Activated CD8-positive, alpha-beta T cell treated with anti-CD3 and anti-CD28 coated beads for 36 hours (primary cell): ENCODE measurements at regions of chr15 and their contacts with region 1.

Region 1: GRCh38 chr15:65054333-65055200 is 9.4 kb downstream of the SLC51B start:
- DNase-seq: peak; percentile 77
- ATAC-seq: peak; percentile 74
- H3K4me3 Mint-ChIP-seq: no peak overlapping the region
- H3K27ac Mint-ChIP-seq: no peak overlapping the region
- H3K4me1 Mint-ChIP-seq: peaks cover 9% of the 10 kb centered on the region
- H3K27me3 Mint-ChIP-seq: no peaks in the 10 kb centered on the region
- CTCF ChIP-seq: peak; percentile 75

Region 2: GRCh38 chr15:65042776-65043327 is 11.7 kb before region 1 on chr15:
- CTCF ChIA-PET with region 1: interaction called, 10 read pairs
- POLR2A ChIA-PET with region 1: no interaction called
- intact Hi-C with region 1: no loop called
- DNase-seq: no peak
- ATAC-seq: no peak
- H3K4me3 Mint-ChIP-seq: no peak overlapping the region
- H3K27ac Mint-ChIP-seq: no peak overlapping the region
- H3K4me1 Mint-ChIP-seq: peaks cover 3% of the 10 kb centered on the region
- H3K27me3 Mint-ChIP-seq: peaks cover 1% of the 10 kb centered on the region
- CTCF ChIP-seq: no peak

Region 3: GRCh38 chr15:65069179-65069578 is 14.6 kb after region 1 on chr15:
- CTCF ChIA-PET with region 1: interaction called, 10 read pairs
- POLR2A ChIA-PET with region 1: no interaction called
- intact Hi-C with region 1: no loop called
- DNase-seq: no peak
- ATAC-seq: no peak
- H3K4me3 Mint-ChIP-seq: no peak overlapping the region
- H3K27ac Mint-ChIP-seq: no peak overlapping the region
- H3K4me1 Mint-ChIP-seq: peaks cover 6% of the 10 kb centered on the region
- H3K27me3 Mint-ChIP-seq: peaks cover 24% of the 10 kb centered on the region
- CTCF ChIP-seq: no peak

Region 4: DNA sequence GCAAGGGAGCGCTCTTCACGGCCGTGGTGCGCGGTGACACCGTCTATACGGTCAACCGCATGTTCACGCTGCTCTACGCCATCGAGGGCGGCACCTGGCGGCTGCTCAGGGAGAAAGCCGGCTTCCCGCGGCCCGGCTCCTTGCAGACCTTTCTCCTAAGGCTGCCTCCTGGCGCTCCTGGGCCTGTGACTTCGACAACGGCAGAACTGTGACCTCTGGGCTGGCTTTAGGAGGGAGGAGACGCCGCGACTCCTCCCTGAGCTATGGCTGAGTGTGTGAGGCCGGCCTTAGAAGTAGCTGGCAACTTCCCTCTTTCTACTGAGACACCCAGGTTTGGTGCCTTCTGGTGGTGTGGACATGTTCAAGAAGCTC is 23.4 kb after region 1 on chr15:
- CTCF ChIA-PET with region 1: interaction called, 37 read pairs
- POLR2A ChIA-PET with region 1: no interaction called
- intact Hi-C with region 1: no loop called
- DNase-seq: peak; percentile 69
- ATAC-seq: peak; percentile 37
- H3K4me3 Mint-ChIP-seq: no peak overlapping the region
- H3K27ac Mint-ChIP-seq: no peak overlapping the region
- H3K4me1 Mint-ChIP-seq: peaks cover 21% of the 10 kb centered on the region
- H3K27me3 Mint-ChIP-seq: peaks cover 37% of the 10 kb centered on the region
- CTCF ChIP-seq: peak; percentile 60

Region 5: DNA sequence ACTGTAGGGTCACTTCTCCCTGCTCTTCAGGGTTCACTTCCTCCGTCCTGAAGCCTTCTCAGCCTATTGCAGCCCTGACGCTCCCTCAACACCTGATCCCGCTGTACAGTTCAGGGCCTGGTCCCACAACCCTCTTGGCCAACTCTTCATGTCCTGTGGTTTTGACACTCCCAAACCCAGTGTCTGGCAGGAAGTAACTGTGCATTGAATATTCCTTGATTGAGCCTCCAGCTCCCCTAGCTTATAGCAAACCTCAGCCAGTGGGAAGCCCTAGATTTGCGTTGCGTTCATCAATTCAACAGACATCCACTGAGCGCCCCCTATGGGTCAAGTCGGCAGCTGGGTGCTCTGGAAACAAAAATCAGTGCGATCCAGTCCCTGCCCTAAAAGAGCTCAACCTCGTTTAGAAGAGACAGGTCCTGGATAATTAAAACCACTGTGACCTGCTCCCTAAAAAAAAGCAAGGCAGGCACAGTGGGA is 46.9 kb after region 1 on chr15:
- CTCF ChIA-PET with region 1: interaction called, 15 read pairs
- POLR2A ChIA-PET with region 1: interaction called, 3 read pairs
- intact Hi-C with region 1: no loop called
- DNase-seq: peak; percentile 75
- ATAC-seq: peak; percentile 53
- H3K4me3 Mint-ChIP-seq: no peak overlapping the region
- H3K27ac Mint-ChIP-seq: no peak overlapping the region
- H3K4me1 Mint-ChIP-seq: peaks cover 5% of the 10 kb centered on the region
- H3K27me3 Mint-ChIP-seq: no peaks in the 10 kb centered on the region
- CTCF ChIP-seq: peak; percentile 81

Region 6: DNA sequence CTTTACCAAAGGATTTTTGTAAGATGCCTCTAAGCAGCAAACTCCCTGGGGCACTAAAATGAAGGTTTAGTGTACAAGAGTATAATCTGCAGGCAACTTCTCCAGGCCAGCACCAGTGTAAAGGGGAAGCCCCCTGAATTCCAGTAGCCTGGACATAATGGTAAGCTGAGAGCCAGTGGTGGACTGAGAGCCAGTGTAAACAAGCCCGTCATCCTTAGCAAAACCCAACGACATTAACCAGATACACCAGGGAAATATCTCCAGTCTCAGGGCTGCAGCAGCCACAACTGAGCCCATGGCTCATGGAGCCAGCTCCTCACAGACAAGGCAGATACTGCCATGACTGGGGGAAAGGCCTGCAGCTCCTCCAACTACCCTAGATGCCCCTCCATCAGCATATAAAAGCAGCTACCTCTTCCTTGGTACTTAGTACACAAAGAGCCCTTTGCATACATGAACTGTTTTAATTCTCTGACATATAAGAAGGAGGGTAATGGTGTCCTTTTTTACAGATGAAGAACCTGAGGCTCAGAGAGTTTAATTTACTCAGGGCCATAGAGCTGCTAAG is 210.4 kb after region 1 on chr15:
- CTCF ChIA-PET with region 1: no interaction called
- POLR2A ChIA-PET with region 1: no interaction called
- intact Hi-C with region 1: no loop called
- DNase-seq: no peak
- ATAC-seq: no peak
- H3K4me3 Mint-ChIP-seq: no peak overlapping the region
- H3K27ac Mint-ChIP-seq: no peak overlapping the region
- H3K4me1 Mint-ChIP-seq: no peaks in the 10 kb centered on the region
- H3K27me3 Mint-ChIP-seq: no peaks in the 10 kb centered on the region
- CTCF ChIP-seq: no peak